ENCODE measurements at regions of chr7 and their contacts with region 1.

Region 1: DNA sequence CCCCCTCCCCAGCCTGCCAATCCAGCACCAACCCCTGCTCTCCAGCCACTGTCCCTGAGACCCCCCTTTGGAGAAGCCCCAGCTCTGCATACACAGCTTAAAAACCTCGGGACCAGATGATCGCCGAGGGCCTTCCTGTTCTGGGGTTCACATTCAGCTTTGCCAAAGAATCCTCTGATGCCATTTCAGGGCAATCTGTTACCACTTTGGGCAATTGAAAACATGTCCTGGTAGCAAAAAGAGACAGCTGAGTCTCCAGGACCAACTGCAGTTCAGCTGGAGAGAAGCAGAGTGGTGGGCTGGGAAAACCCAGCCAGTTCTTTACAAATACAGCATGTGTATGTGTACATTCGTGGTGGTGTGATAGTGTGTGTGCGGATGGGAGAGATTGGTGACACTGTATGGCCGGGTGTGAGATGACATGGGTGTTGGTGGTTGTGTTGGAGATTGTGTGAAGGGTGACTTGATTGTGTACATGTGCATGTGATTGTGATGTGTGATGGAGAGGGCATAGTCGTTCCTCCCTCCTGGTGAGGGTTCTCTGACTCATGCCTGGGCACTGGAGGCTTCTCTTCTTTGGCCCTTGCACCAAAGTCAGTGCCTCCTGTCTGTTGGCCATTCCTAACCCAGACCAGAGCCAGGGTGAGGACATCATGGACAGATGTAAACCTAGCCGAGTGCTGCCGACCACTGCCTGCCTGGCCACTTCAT is 48.5 kb upstream of the AQP1 start:
- DNase-seq: no peak
- ATAC-seq: peak in 1 of 8 donors; percentile 6
- H3K4me3 ChIP-seq: no peak overlapping the region
- H3K27ac ChIP-seq: peak overlapping the region in 6 of 10 donors; percentile 9 to 62 (median 38)
- H3K4me1 ChIP-seq: peaks cover 12 to 57% (median 42%) of the 10 kb centered on the region in 9 donors
- H3K27me3 ChIP-seq: no peaks in the 10 kb centered on the region
- CTCF ChIP-seq: no peak

Region 2: GRCh38 chr7:30650421-30650808 is 212.7 kb before region 1 on chr7:
- intact Hi-C with region 1: no loop called
- DNase-seq: no peak
- ATAC-seq: no peak
- H3K4me3 ChIP-seq: no peak overlapping the region
- H3K27ac ChIP-seq: no peak overlapping the region
- H3K4me1 ChIP-seq: no peaks in the 10 kb centered on the region
- H3K27me3 ChIP-seq: no peaks in the 10 kb centered on the region
- CTCF ChIP-seq: no peak

Region 3: DNA sequence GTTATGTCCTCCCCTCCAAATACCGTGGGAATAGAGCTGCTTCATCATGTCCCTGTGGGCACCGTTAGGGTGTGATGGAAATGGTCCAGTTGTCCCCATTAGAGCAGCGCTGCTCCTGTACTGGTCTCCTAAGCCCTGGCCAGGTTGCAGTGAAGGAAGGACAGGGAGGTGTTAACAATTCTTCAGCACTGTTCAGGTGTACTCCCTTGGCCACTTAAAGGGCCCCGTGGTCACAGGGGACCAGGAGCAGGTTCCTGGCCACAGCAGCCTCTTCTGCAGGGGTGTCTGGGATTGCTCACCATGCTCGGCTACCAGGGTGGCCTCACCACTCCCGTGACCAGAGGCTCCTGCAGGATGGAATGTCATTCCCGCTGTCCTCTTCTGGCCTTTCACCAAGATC is 26.2 kb before region 1 on chr7:
- intact Hi-C with region 1: loop called in 1 of 10 experiments (anchors 1 kb)
- DNase-seq: no peak
- ATAC-seq: no peak
- H3K4me3 ChIP-seq: no peak overlapping the region
- H3K27ac ChIP-seq: no peak overlapping the region
- H3K4me1 ChIP-seq: peaks cover 0 to 17% (median 13%) of the 10 kb centered on the region in 9 donors
- H3K27me3 ChIP-seq: no peaks in the 10 kb centered on the region
- CTCF ChIP-seq: no peak